ENCODE measurements at regions of chr6 and their contacts with region 1.

Region 1: GRCh38 chr6:164303102-164303964 is 888.8 kb downstream of the QKI start:
- DNase-seq: peak; percentile 65
- ATAC-seq: peak; percentile 95

Region 2: DNA sequence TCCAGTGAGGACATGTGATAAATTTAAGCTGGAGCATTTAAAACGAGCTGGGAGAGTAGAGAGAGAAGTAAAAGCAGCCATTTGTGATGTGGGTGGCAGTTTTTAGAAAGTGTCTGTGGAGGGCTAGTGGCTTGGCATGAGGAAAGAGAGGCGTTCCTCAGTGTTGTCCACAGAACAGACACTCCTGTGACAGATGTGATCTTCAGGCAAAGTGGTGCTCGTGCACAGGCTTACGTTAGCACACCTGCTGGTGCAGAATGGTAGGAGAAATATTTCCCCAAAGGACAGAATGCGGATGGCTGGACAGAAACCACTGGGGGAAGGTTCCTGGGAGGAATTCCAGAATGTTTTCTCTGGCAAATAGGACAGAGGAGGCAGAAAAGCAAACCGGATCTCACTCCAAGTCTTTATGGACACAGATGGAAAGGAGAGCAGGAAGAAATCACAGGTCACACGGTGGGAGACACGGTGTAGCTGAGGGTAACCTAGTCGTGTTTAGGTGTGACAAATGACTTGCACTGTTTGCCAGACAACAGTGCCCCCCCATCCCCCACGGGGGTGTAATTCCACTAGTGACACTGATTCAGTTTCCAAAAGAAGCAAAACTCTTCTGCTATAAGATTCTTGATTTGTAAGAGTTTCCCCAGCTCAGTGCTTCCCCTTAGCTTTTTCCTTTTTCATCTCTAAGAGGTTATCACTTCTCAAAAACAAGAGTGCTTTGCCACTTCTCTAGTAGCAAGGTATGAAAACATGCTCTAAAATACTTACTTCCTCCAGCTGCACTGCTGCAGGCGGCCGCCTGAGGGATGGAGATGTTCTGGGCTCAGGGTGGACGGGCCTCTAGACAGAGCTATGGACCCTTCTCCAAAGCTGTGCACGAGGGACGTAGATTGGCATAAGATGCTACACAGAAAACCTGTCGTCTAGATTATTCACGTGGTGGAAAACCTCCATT is 595.7 kb before region 1 on chr6:
- intact Hi-C with region 1: loop called (anchors 10 kb)
- DNase-seq: no peak
- ATAC-seq: no peak